Activated naive CD4-positive, alpha-beta T cell treated with anti-CD3 and anti-CD28 coated beads for 36 hours (primary cell): ENCODE measurements at regions of chr10 and their contacts with region 1.

Region 1: DNA sequence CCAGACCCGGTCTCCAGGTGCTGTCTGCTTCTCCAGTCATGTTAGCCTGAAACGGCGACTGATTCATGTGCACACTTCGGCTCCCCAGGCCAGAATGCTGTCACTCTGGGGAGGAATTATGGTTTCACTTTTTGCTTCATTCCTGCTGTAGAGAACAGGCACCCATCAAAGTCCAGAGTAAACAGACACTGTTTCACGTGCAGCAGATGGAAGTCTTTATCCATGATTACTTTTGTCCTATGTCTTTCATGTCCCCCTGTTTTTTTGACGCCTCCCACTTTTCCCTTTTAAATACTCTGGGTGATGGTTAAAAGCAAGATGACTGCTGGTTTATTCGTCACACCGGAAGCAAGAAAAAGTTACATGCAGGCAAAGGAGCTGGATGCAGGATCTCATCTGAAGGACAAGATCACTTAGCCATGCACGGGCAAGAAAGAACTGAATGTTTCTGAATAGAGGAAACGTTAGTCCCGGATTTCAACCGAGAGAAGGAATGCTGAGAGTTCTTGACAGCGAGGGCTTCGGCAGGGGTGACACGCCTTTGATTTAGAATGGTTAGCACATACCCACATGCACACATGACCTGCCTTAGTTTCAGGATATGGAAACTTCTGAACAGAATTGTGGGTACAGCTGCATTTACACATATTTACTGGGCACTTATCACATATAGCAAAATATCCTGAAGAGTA is 250.0 kb upstream of the KLF6 start:
- DNase-seq: peak; percentile 43
- H3K4me3 Mint-ChIP-seq: peak overlapping the region; percentile 41
- H3K27ac Mint-ChIP-seq: no peak overlapping the region
- H3K4me1 Mint-ChIP-seq: peaks cover 30% of the 10 kb centered on the region
- H3K27me3 Mint-ChIP-seq: no peaks in the 10 kb centered on the region

Region 2: DNA sequence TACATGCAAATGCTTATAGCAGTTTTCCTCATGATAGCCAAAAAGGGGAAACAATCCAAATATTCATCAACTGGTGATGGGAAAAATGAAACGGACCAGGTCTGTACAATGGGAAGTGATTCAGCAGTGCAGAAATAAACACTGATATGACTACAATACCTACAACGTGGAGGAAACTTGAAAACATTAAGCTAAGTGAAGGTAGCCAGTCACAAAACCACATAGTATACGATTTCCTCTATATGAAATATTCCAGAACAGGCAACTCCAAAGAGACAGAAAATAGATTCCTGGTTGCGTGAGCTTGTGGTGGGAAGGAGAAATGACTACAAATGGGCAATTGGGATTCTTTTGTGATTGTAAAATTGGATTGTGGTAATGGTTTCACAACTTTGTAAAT is 599.4 kb before region 1 on chr10:
- CTCF ChIA-PET with region 1: no interaction called
- intact Hi-C with region 1: no loop called
- DNase-seq: no peak
- H3K4me3 Mint-ChIP-seq: no peak overlapping the region
- H3K27ac Mint-ChIP-seq: no peak overlapping the region
- H3K4me1 Mint-ChIP-seq: no peaks in the 10 kb centered on the region
- H3K27me3 Mint-ChIP-seq: no peaks in the 10 kb centered on the region

Region 3: DNA sequence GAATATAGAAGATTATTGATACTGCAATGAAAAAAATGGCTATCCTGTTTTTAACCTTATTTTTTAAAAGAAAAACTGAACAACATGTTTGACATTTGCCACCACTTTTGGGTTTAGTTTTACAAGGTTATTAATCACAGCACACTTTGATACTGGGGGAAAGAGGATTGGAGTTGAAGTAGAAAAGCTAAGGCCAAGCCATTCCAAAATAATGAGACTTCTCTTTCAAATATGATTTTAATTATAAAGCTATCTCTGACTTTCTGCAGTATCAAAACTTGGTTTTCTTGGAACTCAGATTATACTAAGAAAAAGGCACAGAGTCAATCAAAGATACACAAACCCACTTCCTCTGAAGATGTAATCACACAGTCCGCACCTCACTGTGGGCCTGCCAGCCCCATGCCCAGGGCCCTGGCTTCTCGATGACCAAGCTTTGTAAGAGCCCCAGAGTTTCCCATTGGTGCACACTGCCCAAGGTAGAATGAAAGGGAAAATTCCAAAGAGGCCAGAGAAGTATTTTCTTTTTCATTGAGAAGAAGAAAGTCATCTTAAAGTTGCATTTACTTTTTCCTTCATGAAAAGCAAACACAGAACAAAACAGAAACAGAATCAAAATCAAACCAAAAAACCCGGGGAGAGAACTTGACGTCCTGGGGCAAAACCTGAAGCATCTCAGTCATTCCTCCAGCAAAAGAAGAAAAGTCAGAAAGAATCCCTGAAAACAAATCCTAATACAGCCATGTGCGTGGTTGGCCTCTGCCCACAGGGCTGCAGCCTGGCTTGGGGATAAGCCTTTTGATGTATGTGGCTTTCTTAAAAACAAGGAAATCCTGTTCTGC is 62.4 kb before region 1 on chr10:
- CTCF ChIA-PET with region 1: no interaction called
- intact Hi-C with region 1: loop called (anchors 5 kb)
- DNase-seq: peak; percentile 51
- H3K4me3 Mint-ChIP-seq: peak overlapping the region; percentile 62
- H3K27ac Mint-ChIP-seq: peak overlapping the region; percentile 92
- H3K4me1 Mint-ChIP-seq: peaks cover 44% of the 10 kb centered on the region
- H3K27me3 Mint-ChIP-seq: no peaks in the 10 kb centered on the region

Region 4: DNA sequence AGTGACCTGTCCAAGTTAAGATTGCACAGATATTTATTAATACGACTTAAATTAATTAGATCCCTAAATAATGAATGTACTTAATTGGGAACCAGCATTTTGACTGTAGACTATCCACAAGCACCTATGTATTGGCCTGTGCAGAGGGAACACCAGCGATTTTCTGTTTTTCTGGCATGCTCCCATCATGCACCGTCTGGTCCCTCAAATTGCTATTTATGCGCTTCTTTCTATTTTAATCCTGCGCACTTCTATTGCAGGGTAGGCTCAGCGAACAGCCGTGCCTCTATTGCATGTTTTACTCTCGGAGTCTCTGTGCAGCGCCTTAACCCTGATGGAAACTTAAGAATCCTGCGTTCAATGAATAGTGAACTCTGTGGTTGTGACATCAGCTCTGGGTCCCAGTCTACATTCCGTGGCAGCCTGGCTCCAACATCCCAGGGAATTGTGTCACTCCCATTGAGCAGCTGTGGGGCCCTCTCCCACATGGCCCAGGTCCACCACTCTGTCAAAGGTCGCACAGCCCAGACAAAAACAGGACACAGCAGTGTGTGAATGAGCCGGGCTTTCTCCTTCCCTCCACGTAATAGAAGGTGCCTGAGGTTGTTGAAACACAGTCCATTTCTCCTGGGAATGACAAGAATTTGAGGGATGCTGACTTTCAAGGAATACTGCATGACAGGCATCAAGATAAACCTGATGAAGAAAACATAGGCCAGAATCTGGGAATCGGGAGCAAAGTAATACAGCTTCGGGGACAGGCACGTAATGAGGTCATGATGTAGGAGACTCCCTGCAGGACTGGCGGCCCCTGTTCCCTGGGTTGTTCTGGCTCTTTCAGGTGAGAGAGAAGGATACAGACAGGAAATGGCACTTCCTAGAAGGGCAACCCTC is 10.3 kb before region 1 on chr10:
- CTCF ChIA-PET with region 1: no interaction called
- intact Hi-C with region 1: no loop called
- DNase-seq: no peak
- H3K4me3 Mint-ChIP-seq: no peak overlapping the region
- H3K27ac Mint-ChIP-seq: no peak overlapping the region
- H3K4me1 Mint-ChIP-seq: no peaks in the 10 kb centered on the region
- H3K27me3 Mint-ChIP-seq: no peaks in the 10 kb centered on the region

Region 5: DNA sequence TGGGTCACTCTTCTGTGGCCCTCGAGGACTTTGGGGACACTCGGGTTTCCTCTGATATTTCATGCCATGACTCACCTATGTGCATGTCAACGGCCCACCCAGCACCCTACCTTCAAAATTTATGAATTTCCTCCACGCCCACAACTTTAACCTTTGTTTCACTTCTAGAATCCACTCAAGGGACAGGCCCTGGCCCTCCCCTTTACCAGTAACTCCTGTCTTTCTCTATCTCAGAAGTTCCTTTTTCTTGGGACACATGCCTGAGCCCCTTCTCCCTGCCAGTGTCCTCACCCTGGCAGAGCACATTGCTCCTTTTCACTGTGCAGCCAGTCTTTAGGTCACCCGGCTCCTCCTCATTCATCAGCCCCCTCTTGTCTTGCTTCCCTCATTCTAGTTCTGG is 32.5 kb after region 1 on chr10:
- CTCF ChIA-PET with region 1: no interaction called
- intact Hi-C with region 1: loop called (anchors 1 kb)
- DNase-seq: peak; percentile 25
- H3K4me3 Mint-ChIP-seq: no peak overlapping the region
- H3K27ac Mint-ChIP-seq: no peak overlapping the region
- H3K4me1 Mint-ChIP-seq: peaks cover 2% of the 10 kb centered on the region
- H3K27me3 Mint-ChIP-seq: no peaks in the 10 kb centered on the region

Region 6: DNA sequence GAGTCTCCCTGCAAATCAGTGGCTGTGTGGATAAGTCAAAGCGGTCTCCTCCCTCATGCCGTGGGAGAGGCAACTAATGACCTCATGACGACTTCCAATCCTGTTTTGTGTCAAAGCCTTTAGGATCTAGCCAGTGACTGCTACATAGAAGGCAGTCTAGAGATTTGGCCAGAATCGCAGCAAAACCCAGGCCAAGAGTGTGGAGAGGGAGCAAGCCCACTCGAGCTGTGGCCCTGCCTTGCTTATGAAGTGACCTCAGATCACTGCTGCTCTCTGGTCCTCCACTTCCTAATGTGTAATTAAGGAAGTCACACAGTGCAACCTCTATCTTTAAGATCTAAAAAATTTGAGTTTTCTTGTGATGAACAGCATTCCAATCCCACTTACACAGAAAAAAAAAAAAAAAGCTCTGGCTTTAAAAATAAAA is 46.6 kb after region 1 on chr10:
- CTCF ChIA-PET with region 1: no interaction called
- intact Hi-C with region 1: no loop called
- DNase-seq: no peak
- H3K4me3 Mint-ChIP-seq: no peak overlapping the region
- H3K27ac Mint-ChIP-seq: no peak overlapping the region
- H3K4me1 Mint-ChIP-seq: peaks cover 19% of the 10 kb centered on the region
- H3K27me3 Mint-ChIP-seq: no peaks in the 10 kb centered on the region